HEK293 (cell line): ENCODE measurements at regions of chr13 and their contacts with region 1.

Region 1: GRCh38 chr13:60347690-60348089 is 49.3 kb upstream of the TDRD3 start:
- H3K4me3 ChIP-seq: no peak overlapping the region
- H3K27ac ChIP-seq: no peak overlapping the region
- H3K4me1 ChIP-seq: no peaks in the 10 kb centered on the region
- CTCF ChIP-seq: no peak

Region 2: DNA sequence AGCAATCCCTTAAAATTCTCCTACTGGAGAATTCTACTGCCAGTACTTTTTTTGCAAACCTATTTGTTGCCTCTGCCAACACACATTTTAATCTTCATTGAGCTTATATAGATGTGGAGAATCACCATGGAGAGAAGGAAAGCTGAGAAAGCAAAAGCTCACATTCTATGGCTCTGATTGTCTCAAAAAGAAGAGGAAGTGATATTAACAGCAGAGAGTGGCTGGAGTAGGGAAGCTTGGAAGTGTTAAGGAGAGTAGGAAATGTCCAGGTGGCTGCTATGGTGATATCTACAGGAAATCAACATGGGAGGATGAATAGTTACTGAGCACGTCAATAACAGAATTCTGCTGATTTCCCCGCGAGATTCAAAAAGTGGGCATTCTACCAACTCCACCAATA is 29.5 kb before region 1 on chr13:
- CTCF ChIA-PET with region 1: no interaction called
- POLR2A ChIA-PET with region 1: no interaction called
- H3K4me3 ChIP-seq: no peak overlapping the region
- H3K27ac ChIP-seq: no peak overlapping the region
- H3K4me1 ChIP-seq: no peaks in the 10 kb centered on the region
- CTCF ChIP-seq: no peak

Region 3: GRCh38 chr13:60329221-60329983 is 18.3 kb before region 1 on chr13:
- CTCF ChIA-PET with region 1: interaction called, 10 read pairs
- POLR2A ChIA-PET with region 1: no interaction called
- H3K4me3 ChIP-seq: no peak overlapping the region
- H3K27ac ChIP-seq: no peak overlapping the region
- H3K4me1 ChIP-seq: no peaks in the 10 kb centered on the region
- CTCF ChIP-seq: no peak